Activated CD4-positive, alpha-beta T cell treated with anti-CD3 and anti-CD28 coated beads, Interleukin-2, amount 10 ng/mL, durations not matched to agents 24 days and 14 days (primary cell): ENCODE measurements at regions of chr16 and their contacts with region 1.

Region 1: GRCh38 chr16:85114909-85115567 is 2.8 kb upstream of the CIBAR2 start:
- DNase-seq: peak; percentile 95
- H3K4me3 Mint-ChIP-seq: peak overlapping the region; percentile 74
- H3K27ac Mint-ChIP-seq: peak overlapping the region; percentile 87
- H3K4me1 Mint-ChIP-seq: peaks cover 6% of the 10 kb centered on the region
- H3K27me3 Mint-ChIP-seq: no peaks in the 10 kb centered on the region

Region 2: DNA sequence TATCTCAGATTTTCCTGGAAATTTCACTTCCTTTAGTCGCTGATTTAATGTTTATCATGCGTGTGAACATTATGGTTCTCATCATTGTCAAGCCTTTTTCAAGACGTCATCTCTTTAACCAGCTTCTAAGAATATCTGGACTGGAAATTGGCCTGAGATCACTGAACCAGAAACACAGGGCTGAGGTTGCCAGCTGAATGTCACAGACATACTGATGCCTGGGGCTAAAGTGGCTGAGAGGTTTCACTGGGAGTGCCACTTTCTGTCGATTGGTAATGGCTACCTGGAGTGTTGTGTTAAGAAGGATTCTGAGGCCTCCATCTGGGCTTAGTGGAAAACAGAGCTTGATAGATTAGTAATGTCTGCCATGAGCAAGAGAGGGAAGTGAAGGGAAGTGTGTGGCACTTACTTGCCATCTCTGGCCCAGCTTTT is 241.0 kb before region 1 on chr16:
- intact Hi-C with region 1: no loop called
- DNase-seq: no peak
- H3K4me3 Mint-ChIP-seq: no peak overlapping the region
- H3K27ac Mint-ChIP-seq: no peak overlapping the region
- H3K4me1 Mint-ChIP-seq: no peaks in the 10 kb centered on the region
- H3K27me3 Mint-ChIP-seq: no peaks in the 10 kb centered on the region

Region 3: GRCh38 chr16:85245307-85246172 is 130.5 kb after region 1 on chr16:
- intact Hi-C with region 1: loop called (anchors 10 kb)
- DNase-seq: peak; percentile 82
- H3K4me3 Mint-ChIP-seq: no peak overlapping the region
- H3K27ac Mint-ChIP-seq: no peak overlapping the region
- H3K4me1 Mint-ChIP-seq: peaks cover 3% of the 10 kb centered on the region
- H3K27me3 Mint-ChIP-seq: peaks cover 7% of the 10 kb centered on the region